PC-9 (cell line): ENCODE measurements at regions of chr16 and their contacts with region 1.

Region 1: DNA sequence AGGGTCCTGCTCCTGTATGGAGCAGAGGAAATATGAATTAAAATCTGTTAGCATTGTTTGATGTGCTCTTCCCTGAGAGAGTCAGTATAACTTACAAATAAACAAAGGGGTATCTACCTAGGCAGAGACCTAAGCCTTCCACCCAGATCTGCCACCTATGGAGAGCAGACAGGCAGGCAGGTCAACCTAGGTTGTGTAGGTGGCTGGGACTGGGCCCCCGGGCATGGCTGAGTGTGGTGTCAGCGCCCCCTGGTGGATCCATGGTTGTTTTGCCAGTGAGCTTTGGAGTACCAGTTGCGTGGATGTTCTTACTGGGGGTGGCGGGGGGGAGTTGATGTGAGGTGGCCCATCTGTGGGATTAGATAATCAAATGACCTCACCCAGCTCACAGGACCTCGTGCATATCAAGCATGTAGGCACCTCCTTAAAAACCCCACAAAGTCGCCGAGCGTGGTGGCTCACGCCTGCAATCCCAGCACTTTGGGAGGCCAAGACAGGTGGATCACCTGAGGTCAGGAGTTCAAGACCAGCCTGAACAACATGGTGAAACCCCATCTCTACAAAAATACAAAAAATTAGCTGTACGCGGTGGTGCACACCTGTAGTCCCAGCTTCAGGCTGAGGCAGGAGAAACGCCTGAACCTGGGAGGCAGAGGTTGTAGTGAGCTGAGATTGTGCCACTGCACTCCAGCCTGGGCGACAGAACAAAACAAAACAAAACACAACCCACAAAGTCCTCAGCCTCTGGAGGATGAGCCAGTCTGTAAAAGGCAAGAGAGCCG is 17.6 kb downstream of the DUS2 start:
- DNase-seq: peak; percentile 55 to 83
- H3K4me3 ChIP-seq: no peak overlapping the region
- H3K27ac ChIP-seq: no peak overlapping the region
- H3K4me1 ChIP-seq: no peaks in the 10 kb centered on the region
- H3K27me3 ChIP-seq: no peaks in the 10 kb centered on the region
- CTCF ChIP-seq: peak; percentile 94

Region 2: GRCh38 chr16:67672739-67673662 is 367.7 kb before region 1 on chr16:
- CTCF ChIA-PET with region 1: no interaction called
- POLR2A ChIA-PET with region 1: no interaction called
- intact Hi-C with region 1: loop called (anchors 2 kb)
- DNase-seq: peak; percentile 39 to 67
- H3K4me3 ChIP-seq: no peak overlapping the region
- H3K27ac ChIP-seq: no peak overlapping the region
- H3K4me1 ChIP-seq: peaks cover 25% of the 10 kb centered on the region
- H3K27me3 ChIP-seq: no peaks in the 10 kb centered on the region
- CTCF ChIP-seq: peak; percentile 84

Region 3: GRCh38 chr16:67883872-67884261 is 156.8 kb before region 1 on chr16:
- CTCF ChIA-PET with region 1: interaction called, 13 read pairs
- POLR2A ChIA-PET with region 1: no interaction called
- intact Hi-C with region 1: loop called (anchors 2 kb)
- DNase-seq: peak in 1 of 2 experiments; percentile 67
- H3K4me3 ChIP-seq: no peak overlapping the region
- H3K27ac ChIP-seq: no peak overlapping the region
- H3K4me1 ChIP-seq: no peaks in the 10 kb centered on the region
- H3K27me3 ChIP-seq: no peaks in the 10 kb centered on the region
- CTCF ChIP-seq: peak; percentile 92

Region 4: GRCh38 chr16:67959520-67959919 is 81.2 kb before region 1 on chr16:
- CTCF ChIA-PET with region 1: interaction called, 6 read pairs
- POLR2A ChIA-PET with region 1: no interaction called
- intact Hi-C with region 1: loop called (anchors 1 kb)
- DNase-seq: no peak
- H3K4me3 ChIP-seq: no peak overlapping the region
- H3K27ac ChIP-seq: no peak overlapping the region
- H3K4me1 ChIP-seq: no peaks in the 10 kb centered on the region
- H3K27me3 ChIP-seq: no peaks in the 10 kb centered on the region
- CTCF ChIP-seq: no peak